Mucosa of descending colon (tissue), 3 donors: ENCODE measurements at regions of chr7 and their contacts with region 1.

Region 1: GRCh38 chr7:158976849-158977593 is 120.7 kb downstream of the DYNC2I1 start:
- DNase-seq: peak in 2 of 3 donors; percentile 91 to 98
- ATAC-seq: peak; percentile 87
- H3K4me3 ChIP-seq: no peak overlapping the region
- H3K4me1 ChIP-seq: peaks cover 17% of the 10 kb centered on the region
- CTCF ChIP-seq: peak; percentile 85

Region 2: DNA sequence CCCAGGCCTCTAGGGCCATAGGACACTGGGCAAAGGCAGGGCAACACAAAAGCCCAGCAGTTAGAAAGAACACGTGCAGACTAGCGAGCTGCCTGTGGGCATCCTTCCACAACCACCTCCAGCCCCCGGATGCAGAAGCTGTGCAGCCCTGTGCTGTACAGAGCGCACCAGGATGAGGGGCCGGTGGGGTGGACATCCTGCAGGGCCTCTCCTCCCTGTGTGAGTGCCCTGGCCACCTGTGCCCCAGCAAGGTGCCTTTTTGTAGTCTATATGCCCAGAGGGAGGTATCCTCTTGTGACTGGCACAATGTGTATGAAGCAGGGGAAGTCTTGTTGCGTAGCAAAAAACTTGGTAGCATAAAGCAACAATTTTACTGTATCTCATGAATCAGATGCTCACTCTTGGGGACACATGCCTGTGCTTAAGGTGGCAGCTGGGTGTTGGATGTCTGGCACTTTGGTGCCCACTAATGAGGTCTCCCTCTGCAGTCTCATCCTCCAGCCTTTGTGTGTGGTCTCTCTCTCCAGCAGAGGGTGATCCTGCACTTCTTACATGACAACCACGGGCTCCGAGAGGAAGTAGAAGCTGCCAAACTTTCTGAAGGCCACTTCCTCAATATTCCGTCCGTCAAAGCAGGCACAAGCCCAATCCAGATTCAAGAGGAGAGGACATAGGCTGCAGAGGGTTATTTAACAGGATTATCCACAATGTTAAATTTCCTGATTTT is 281.1 kb before region 1 on chr7:
- intact Hi-C with region 1: loop called in 1 of 2 experiments (anchors 10 kb)
- DNase-seq: peak in 2 of 3 donors; percentile 40 to 84
- ATAC-seq: peak; percentile 99
- H3K4me3 ChIP-seq: no peak overlapping the region
- H3K4me1 ChIP-seq: peaks cover 4% of the 10 kb centered on the region
- CTCF ChIP-seq: peak; percentile 32

Region 3: DNA sequence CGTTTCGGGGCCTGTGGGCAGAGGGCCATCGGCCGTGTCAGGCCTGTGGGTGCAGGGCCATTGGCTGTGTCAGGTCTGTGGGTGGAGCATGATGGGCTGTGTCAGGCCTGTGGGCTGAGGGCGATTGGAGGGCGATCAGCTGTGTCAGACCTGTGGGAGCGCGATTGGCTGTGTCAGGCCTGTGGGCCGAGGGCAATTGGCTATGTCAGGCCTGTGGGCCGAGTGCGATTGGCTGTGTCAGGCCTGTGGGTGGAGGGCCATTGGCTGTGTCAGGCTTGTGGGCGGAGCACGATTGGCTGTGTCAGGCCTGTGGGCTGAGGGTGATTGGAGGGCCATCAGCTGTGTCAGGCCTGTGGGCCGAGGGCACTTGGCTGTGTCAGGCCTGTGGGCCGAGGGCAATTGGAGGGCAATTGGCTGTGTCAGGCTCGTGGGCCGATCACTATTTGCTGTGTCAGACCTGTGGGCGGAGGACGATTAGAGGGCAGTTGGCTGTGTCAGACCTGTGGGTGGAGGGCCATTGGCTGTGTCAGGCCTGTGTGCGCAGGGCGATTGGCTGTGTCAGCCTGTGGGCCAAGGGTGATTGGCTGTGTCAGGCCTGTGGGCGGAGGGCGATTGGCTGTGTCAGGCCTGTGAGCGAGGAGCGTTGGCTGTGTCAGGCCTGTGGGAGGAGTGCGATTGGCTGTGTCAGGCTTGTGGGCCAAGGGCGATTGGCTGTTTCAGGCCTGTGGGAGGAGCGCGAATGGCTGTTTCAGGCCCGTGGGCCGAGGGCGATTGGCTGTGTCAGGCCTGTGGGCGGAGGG is 66.6 kb before region 1 on chr7:
- intact Hi-C with region 1: no loop called
- DNase-seq: no peak
- ATAC-seq: no peak
- H3K4me3 ChIP-seq: no peak overlapping the region
- H3K4me1 ChIP-seq: no peaks in the 10 kb centered on the region
- CTCF ChIP-seq: no peak